Naive thymus-derived CD4-positive, alpha-beta T cell (primary cell): ENCODE measurements at regions of chr1 and their contacts with region 1.

Region 1: DNA sequence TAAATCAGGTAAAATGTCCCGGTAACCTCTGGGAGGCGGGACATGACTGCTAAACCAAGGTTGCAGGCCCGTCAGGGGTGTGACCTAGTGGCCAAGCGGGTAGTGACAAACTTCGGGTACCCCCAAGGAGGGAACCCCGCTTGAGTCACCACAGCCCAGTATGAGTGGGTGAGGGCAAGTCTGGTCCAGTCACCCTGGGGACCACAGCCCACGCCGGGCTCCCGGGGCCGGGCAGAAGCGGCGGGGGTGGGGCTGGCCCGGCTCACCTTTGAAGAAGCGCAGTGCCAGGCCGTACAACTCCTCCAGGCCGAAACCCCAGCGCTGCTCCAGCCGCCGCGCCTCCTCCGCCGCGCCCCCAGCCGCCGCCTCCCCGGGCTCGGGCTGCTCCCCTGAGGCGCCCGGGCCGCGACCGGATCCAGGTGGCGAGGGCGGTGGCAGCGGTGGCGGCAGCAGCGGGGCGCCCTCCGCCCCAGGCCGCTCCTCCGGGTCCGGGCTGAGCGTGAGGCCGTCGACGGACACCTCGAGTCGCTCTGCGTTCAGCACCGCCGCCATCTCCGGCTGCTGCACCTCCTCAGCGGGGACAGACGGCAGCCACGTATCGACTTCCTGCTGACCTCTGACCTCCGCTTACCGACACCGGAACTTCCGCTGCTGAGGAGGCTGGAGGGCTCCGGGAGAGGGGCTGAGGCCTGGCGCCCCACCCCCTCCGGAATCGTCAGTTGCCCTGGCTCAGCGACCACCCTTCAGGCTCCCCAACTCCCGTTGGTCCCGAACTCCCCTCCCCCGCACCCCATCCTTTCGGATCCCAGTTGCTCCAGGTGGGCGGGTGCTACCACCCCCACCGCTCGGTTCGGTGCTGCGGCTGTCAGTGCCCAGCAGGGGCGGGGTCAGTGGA is at the start of gene ACBD3:
- DNase-seq: peak; percentile 66 to 87 (median 83)
- ATAC-seq: peak; percentile 96
- H3K4me3 ChIP-seq: peak within 1 kb of the TSS; percentile 97
- H3K4me3 Mint-ChIP-seq: peak within 1 kb of the TSS; percentile 91 to 99 (median 94)
- H3K27ac ChIP-seq: peak within 1 kb of the TSS; percentile 84
- H3K27ac Mint-ChIP-seq: peak within 1 kb of the TSS; percentile 88 to 98 (median 94)
- H3K4me1 ChIP-seq: peaks cover 23 to 30% of the 10 kb centered on the region in 2 donors
- H3K4me1 Mint-ChIP-seq: peaks cover 28 to 44% (median 36%) of the 10 kb centered on the region in 7 donors
- H3K27me3 ChIP-seq: no peaks in the 10 kb centered on the region
- H3K27me3 Mint-ChIP-seq: no peaks in the 10 kb centered on the region
- total RNA-seq, gene ACBD3: 19.6 to 29.9 (median 26.1) TPM

Region 2: GRCh38 chr1:225467193-225468020 is 719.0 kb before region 1 on chr1:
- CTCF ChIA-PET with region 1: no interaction called
- POLR2A ChIA-PET with region 1: no interaction called
- intact Hi-C with region 1: loop called in 1 of 2 experiments (anchors 2 kb)
- DNase-seq: peak; percentile 57 to 85 (median 81)
- ATAC-seq: peak; percentile 91
- H3K4me3 ChIP-seq: peak overlapping the region; percentile 94
- H3K4me3 Mint-ChIP-seq: peak overlapping the region; percentile 81 to 94 (median 92)
- H3K27ac ChIP-seq: peak overlapping the region; percentile 85
- H3K27ac Mint-ChIP-seq: peak overlapping the region; percentile 89 to 98 (median 98)
- H3K4me1 ChIP-seq: peaks cover 22 to 40% of the 10 kb centered on the region in 2 donors
- H3K4me1 Mint-ChIP-seq: peaks cover 33 to 65% (median 48%) of the 10 kb centered on the region in 7 donors
- H3K27me3 ChIP-seq: no peaks in the 10 kb centered on the region
- H3K27me3 Mint-ChIP-seq: no peaks in the 10 kb centered on the region

Region 3: GRCh38 chr1:225712391-225712790 is 474.0 kb before region 1 on chr1:
- CTCF ChIA-PET with region 1: no interaction called
- POLR2A ChIA-PET with region 1: no interaction called
- intact Hi-C with region 1: no loop called
- DNase-seq: no peak
- ATAC-seq: peak; percentile 85
- H3K4me3 ChIP-seq: no peak overlapping the region
- H3K4me3 Mint-ChIP-seq: no peak overlapping the region
- H3K27ac ChIP-seq: no peak overlapping the region
- H3K27ac Mint-ChIP-seq: no peak overlapping the region
- H3K4me1 ChIP-seq: no peaks in the 10 kb centered on the region
- H3K4me1 Mint-ChIP-seq: no peaks in the 10 kb centered on the region
- H3K27me3 ChIP-seq: no peaks in the 10 kb centered on the region
- H3K27me3 Mint-ChIP-seq: peaks cover 0 to 6% (median 0%) of the 10 kb centered on the region in 5 donors

Region 4: GRCh38 chr1:226083302-226084101 is 102.9 kb before region 1 on chr1:
- CTCF ChIA-PET with region 1: no interaction called
- POLR2A ChIA-PET with region 1: no interaction called
- intact Hi-C with region 1: loop called (anchors 1 to 5 kb)
- DNase-seq: peak; percentile 79 to 98 (median 87)
- ATAC-seq: peak; percentile 98
- H3K4me3 ChIP-seq: peak overlapping the region; percentile 77
- H3K4me3 Mint-ChIP-seq: peak overlapping the region; percentile 78 to 94 (median 91)
- H3K27ac ChIP-seq: peak overlapping the region; percentile 65
- H3K27ac Mint-ChIP-seq: peak overlapping the region; percentile 25 to 93 (median 75)
- H3K4me1 ChIP-seq: peaks cover 5 to 8% of the 10 kb centered on the region in 2 donors
- H3K4me1 Mint-ChIP-seq: peaks cover 5 to 12% (median 8%) of the 10 kb centered on the region in 7 donors
- H3K27me3 ChIP-seq: no peaks in the 10 kb centered on the region
- H3K27me3 Mint-ChIP-seq: peaks cover 0 to 10% (median 0%) of the 10 kb centered on the region in 5 donors

Region 5: GRCh38 chr1:226308723-226309315 is 122.4 kb after region 1 on chr1 and contains the start of gene LIN9:
- CTCF ChIA-PET with region 1: no interaction called
- POLR2A ChIA-PET with region 1: no interaction called
- intact Hi-C with region 1: loop called in 1 of 2 experiments (anchors 5 kb)
- DNase-seq: peak; percentile 83 to 94 (median 88)
- ATAC-seq: peak; percentile 97
- H3K4me3 ChIP-seq: peak within 1 kb of the TSS; percentile 99
- H3K4me3 Mint-ChIP-seq: peak within 1 kb of the TSS; percentile 88 to 95 (median 92)
- H3K27ac ChIP-seq: peak within 1 kb of the TSS; percentile 76
- H3K27ac Mint-ChIP-seq: peak within 1 kb of the TSS; percentile 34 to 97 (median 85)
- H3K4me1 ChIP-seq: peaks cover 5% of the 10 kb centered on the region in 2 donors
- H3K4me1 Mint-ChIP-seq: peaks cover 14 to 37% (median 22%) of the 10 kb centered on the region in 7 donors
- H3K27me3 ChIP-seq: peaks cover 0 to 4% of the 10 kb centered on the region in 2 donors
- H3K27me3 Mint-ChIP-seq: peaks cover 5 to 19% (median 14%) of the 10 kb centered on the region in 5 donors
- total RNA-seq, gene LIN9: 2.0 to 8.0 (median 5.0) TPM

Region 6: GRCh38 chr1:226444901-226445300 is 258.5 kb after region 1 on chr1:
- CTCF ChIA-PET with region 1: no interaction called
- POLR2A ChIA-PET with region 1: no interaction called
- intact Hi-C with region 1: loop called in 1 of 2 experiments (anchors 1 kb)
- DNase-seq: peak; percentile 18 to 89 (median 78)
- ATAC-seq: peak; percentile 98
- H3K4me3 ChIP-seq: no peak overlapping the region
- H3K4me3 Mint-ChIP-seq: peak overlapping the region; percentile 41 to 74 (median 58)
- H3K27ac ChIP-seq: no peak overlapping the region
- H3K27ac Mint-ChIP-seq: peak overlapping the region; percentile 64 to 96 (median 83)
- H3K4me1 ChIP-seq: peaks cover 16 to 26% of the 10 kb centered on the region in 2 donors
- H3K4me1 Mint-ChIP-seq: peaks cover 26 to 41% (median 35%) of the 10 kb centered on the region in 7 donors
- H3K27me3 ChIP-seq: no peaks in the 10 kb centered on the region
- H3K27me3 Mint-ChIP-seq: peaks cover 0 to 51% (median 0%) of the 10 kb centered on the region in 5 donors

Region 7: GRCh38 chr1:227006226-227006796 is 819.9 kb after region 1 on chr1:
- CTCF ChIA-PET with region 1: no interaction called
- POLR2A ChIA-PET with region 1: no interaction called
- intact Hi-C with region 1: no loop called
- DNase-seq: no peak
- ATAC-seq: no peak
- H3K4me3 ChIP-seq: no peak overlapping the region
- H3K4me3 Mint-ChIP-seq: no peak overlapping the region
- H3K27ac ChIP-seq: no peak overlapping the region
- H3K27ac Mint-ChIP-seq: no peak overlapping the region
- H3K4me1 ChIP-seq: no peaks in the 10 kb centered on the region
- H3K4me1 Mint-ChIP-seq: peaks cover 0 to 3% (median 0%) of the 10 kb centered on the region in 7 donors
- H3K27me3 ChIP-seq: no peaks in the 10 kb centered on the region
- H3K27me3 Mint-ChIP-seq: peaks cover 0 to 12% (median 5%) of the 10 kb centered on the region in 5 donors